Heart right ventricle (tissue), 16 donors: ENCODE measurements at regions of chr3 and their contacts with region 1.

Region 1: DNA sequence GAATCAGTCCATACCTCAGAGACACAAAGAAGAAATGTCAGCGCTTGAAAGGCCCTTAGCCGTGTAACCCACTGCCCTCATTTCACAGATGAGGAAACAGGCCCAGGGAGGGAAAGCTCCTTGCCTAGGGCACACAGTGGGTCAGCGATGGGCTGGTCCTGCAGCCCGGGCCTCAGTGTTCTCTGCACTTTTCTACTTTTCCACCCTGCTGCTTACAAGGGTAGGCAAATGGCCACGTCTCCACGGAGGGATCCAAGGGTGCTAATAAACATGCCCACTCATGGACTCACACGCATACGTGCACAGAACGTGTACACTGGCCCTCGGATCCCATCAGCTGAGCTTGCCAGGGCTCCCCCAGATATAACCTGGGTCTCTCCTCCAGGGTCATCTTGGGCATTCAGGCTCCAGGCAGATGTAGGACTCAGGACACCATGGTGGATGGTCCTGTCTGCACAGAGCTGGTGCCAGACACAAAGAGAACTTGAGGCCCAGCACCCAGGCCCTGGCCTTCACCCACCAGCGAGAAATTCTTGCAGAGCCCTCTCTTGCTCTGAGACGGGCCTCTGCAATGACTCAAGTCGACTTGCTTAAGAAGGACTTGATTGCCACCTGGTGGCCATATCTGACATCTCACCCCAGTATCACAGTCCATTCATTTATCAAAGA is 34.5 kb upstream of the VPS8 start:
- DNase-seq: peak; percentile 60 to 91
- ATAC-seq: peak; percentile 80 to 90 (median 86)
- H3K4me3 ChIP-seq: no peak overlapping the region
- H3K27ac ChIP-seq: no peak overlapping the region
- H3K4me1 ChIP-seq: peaks cover 0 to 23% (median 11%) of the 10 kb centered on the region in 9 donors
- H3K27me3 ChIP-seq: peaks cover 0 to 29% (median 17%) of the 10 kb centered on the region in 7 donors
- CTCF ChIP-seq: peak; percentile 76 to 90 (median 85)

Region 2: DNA sequence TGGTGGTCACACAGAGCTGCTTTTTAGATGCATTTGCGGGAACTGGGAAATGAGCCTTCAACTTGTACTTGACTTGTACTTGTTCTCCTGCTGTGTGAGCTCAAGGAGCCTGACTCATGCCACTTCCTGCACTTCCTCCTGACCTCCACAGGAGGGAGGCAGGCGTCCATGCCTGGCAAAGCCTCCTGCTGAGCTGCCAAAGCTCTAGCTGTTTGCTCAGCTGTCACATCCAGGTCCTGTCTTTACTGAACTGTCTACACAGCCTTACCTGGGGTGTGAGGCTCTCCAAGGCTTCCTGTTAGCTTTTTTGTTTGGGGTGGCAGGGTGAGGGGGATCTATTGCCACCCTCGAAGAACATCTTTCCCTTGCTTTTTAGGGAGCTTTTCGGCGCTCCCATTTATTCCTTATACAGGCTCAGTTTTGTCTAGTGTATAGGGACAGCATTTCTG is 405.9 kb before region 1 on chr3:
- intact Hi-C with region 1: loop called in 6 of 10 experiments (anchors 10 kb)
- DNase-seq: peak; percentile 73 to 74
- ATAC-seq: peak; percentile 86 to 91 (median 87)
- H3K4me3 ChIP-seq: no peak overlapping the region
- H3K27ac ChIP-seq: no peak overlapping the region
- H3K4me1 ChIP-seq: peaks cover 6 to 33% (median 24%) of the 10 kb centered on the region in 9 donors
- H3K27me3 ChIP-seq: peaks cover 0 to 21% (median 12%) of the 10 kb centered on the region in 7 donors
- CTCF ChIP-seq: peak; percentile 78 to 97 (median 94)

Region 3: DNA sequence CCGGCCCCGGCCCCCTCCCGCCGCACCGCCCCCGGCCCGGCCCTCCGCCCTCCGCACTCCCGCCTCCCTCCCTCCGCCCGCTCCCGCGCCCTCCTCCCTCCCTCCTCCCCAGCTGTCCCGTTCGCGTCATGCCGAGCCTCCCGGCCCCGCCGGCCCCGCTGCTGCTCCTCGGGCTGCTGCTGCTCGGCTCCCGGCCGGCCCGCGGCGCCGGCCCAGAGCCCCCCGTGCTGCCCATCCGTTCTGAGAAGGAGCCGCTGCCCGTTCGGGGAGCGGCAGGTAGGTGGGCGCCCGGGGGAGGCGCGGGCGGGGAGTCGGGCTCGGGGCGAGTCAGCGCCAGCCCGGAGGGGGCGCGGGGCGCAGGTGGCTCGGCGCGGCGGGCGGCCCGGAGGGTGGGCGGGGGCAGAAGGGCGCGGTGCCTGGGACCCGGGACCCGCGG is 397.3 kb before region 1 on chr3:
- intact Hi-C with region 1: loop called in 7 of 10 experiments (anchors 10 kb)
- DNase-seq: peak; percentile 69 to 80
- ATAC-seq: peak in 6 of 8 donors; percentile 41 to 62 (median 48)
- H3K4me3 ChIP-seq: peak overlapping the region; percentile 11 to 58 (median 54)
- H3K27ac ChIP-seq: peak overlapping the region in 6 of 10 donors; percentile 41 to 79 (median 68)
- H3K4me1 ChIP-seq: peaks cover 7 to 40% (median 21%) of the 10 kb centered on the region in 9 donors
- H3K27me3 ChIP-seq: peaks cover 5 to 78% (median 62%) of the 10 kb centered on the region in 7 donors
- CTCF ChIP-seq: no peak

Region 4: GRCh38 chr3:184561061-184561912 is 216.2 kb before region 1 on chr3 and contains the start of gene EPHB3:
- intact Hi-C with region 1: loop called in 6 of 10 experiments (anchors 1 to 2 kb)
- DNase-seq: peak; percentile 98
- ATAC-seq: peak; percentile 96 to 98 (median 97)
- H3K4me3 ChIP-seq: peak within 1 kb of the TSS; percentile 47 to 77 (median 68)
- H3K27ac ChIP-seq: peak within 1 kb of the TSS in 7 of 10 donors; percentile 45 to 77 (median 63)
- H3K4me1 ChIP-seq: peaks cover 6 to 51% (median 27%) of the 10 kb centered on the region in 9 donors
- H3K27me3 ChIP-seq: peaks cover 0 to 54% (median 28%) of the 10 kb centered on the region in 7 donors
- CTCF ChIP-seq: peak; percentile 86 to 100 (median 99)
- total RNA-seq, gene EPHB3: 0.38 to 4.0 (median 2.3) TPM

Region 5: GRCh38 chr3:184727357-184728009 is 50.0 kb before region 1 on chr3:
- intact Hi-C with region 1: loop called in 5 of 10 experiments (anchors 5 kb)
- DNase-seq: peak in 1 of 2 donors; percentile 67
- ATAC-seq: peak; percentile 69 to 93 (median 88)
- H3K4me3 ChIP-seq: no peak overlapping the region
- H3K27ac ChIP-seq: no peak overlapping the region
- H3K4me1 ChIP-seq: peaks cover 0 to 13% (median 0%) of the 10 kb centered on the region in 9 donors
- H3K27me3 ChIP-seq: no peaks in the 10 kb centered on the region
- CTCF ChIP-seq: peak; percentile 47 to 83 (median 77)

Region 6: DNA sequence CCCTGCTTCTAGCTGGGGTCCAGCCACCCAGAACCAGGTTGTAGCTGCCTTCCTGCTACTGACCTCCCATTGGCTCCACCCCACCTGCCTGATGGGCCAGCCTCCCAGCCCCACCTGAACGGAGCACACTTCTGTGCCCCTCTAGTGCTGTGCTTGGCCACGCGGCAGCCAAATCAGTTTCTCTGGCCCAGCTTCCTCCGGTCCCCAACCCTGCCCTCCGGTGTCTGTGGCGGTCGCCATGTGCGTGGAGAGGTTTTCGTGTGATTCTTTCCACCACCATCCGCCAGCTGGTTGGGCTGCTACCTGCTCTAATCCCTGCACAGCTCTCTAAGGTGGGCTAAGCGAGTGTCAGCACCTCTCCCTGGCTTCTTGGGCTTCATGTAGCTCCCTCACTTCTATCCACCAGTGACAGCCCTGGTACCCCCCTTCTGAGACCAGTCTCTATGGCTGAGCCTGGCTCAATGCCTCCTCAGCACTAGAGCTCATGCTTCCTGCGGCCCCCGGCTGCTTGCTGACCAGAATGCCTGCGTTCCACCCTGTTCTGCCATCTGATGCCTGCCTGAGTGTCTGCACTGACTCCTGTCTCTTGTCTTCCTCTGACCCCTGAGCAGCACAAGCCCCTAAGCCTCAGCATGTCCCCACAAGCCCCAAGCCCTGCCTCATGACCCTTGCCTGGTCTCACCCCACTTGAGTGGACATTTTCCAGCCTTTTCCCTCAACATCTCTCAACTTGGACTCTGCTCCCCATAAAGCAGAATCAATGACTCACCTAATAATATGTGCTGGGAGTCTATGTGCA is 42.4 kb before region 1 on chr3:
- intact Hi-C with region 1: loop called in 1 of 10 experiments (anchors 5 kb)
- DNase-seq: no peak
- ATAC-seq: no peak
- H3K4me3 ChIP-seq: no peak overlapping the region
- H3K27ac ChIP-seq: no peak overlapping the region
- H3K4me1 ChIP-seq: peaks cover 0 to 4% (median 0%) of the 10 kb centered on the region in 9 donors
- H3K27me3 ChIP-seq: peaks cover 0 to 12% (median 0%) of the 10 kb centered on the region in 7 donors
- CTCF ChIP-seq: no peak

Region 7: GRCh38 chr3:184864000-184864399 is 86.5 kb after region 1 on chr3:
- intact Hi-C with region 1: no loop called
- DNase-seq: no peak
- ATAC-seq: peak in 2 of 8 donors; percentile 24 to 25
- H3K4me3 ChIP-seq: no peak overlapping the region
- H3K27ac ChIP-seq: no peak overlapping the region
- H3K4me1 ChIP-seq: no peaks in the 10 kb centered on the region
- H3K27me3 ChIP-seq: no peaks in the 10 kb centered on the region
- CTCF ChIP-seq: no peak